Panc1 (cell line): ENCODE measurements at regions of chr5 and their contacts with region 1.

Region 1: GRCh38 chr5:157431544-157432200 is 28.3 kb upstream of the NIPAL4 start:
- DNase-seq: peak; percentile 24
- ATAC-seq: peak; percentile 79
- H3K4me3 ChIP-seq: no peak overlapping the region
- H3K27ac ChIP-seq: no peak overlapping the region
- H3K4me1 ChIP-seq: no peaks in the 10 kb centered on the region
- H3K27me3 ChIP-seq: no peaks in the 10 kb centered on the region
- CTCF ChIP-seq: peak; percentile 62

Region 2: DNA sequence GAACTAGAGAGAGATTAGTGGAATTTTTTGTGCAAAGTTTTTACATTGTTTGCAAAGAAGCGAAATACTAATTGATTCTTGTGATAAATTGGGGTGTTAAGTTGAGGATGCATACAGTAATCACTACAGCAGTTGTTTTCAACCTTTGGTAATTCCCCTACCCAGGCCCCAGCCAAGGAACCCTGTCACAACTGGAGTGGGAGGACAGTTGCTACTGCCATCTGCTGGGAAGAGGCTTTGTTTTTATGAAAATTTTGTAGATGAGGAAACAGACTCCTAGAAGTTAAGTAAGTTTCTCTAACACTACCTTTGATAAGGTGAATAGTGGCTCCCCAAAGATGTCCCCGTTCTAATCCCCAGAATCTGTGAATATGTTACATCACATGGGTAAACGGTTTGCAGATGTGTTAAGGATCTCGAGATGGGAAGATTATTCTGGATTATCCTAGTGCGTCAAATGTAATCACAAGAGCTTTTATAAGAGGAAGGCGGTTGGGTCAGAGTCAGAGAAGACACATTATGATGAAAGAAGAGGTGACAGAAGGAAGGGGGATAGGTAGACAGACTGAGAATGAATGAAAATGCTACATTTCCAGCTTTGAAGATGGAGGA is 615.6 kb before region 1 on chr5:
- CTCF ChIA-PET with region 1: no interaction called
- POLR2A ChIA-PET with region 1: no interaction called
- in situ Hi-C with region 1: no loop called
- intact Hi-C with region 1: no loop called
- DNase-seq: no peak
- ATAC-seq: no peak
- H3K4me3 ChIP-seq: no peak overlapping the region
- H3K27ac ChIP-seq: no peak overlapping the region
- H3K4me1 ChIP-seq: no peaks in the 10 kb centered on the region
- H3K27me3 ChIP-seq: no peaks in the 10 kb centered on the region
- CTCF ChIP-seq: peak; percentile 66

Region 3: GRCh38 chr5:157253547-157253946 is 178.1 kb before region 1 on chr5:
- CTCF ChIA-PET with region 1: interaction called, 10 read pairs
- POLR2A ChIA-PET with region 1: no interaction called
- in situ Hi-C with region 1: no loop called
- intact Hi-C with region 1: no loop called
- DNase-seq: peak; percentile 39
- ATAC-seq: peak; percentile 73; the same call in 1 of the 2 replicates
- H3K4me3 ChIP-seq: no peak overlapping the region
- H3K27ac ChIP-seq: no peak overlapping the region
- H3K4me1 ChIP-seq: no peaks in the 10 kb centered on the region
- H3K27me3 ChIP-seq: no peaks in the 10 kb centered on the region
- CTCF ChIP-seq: peak; percentile 87

Region 4: DNA sequence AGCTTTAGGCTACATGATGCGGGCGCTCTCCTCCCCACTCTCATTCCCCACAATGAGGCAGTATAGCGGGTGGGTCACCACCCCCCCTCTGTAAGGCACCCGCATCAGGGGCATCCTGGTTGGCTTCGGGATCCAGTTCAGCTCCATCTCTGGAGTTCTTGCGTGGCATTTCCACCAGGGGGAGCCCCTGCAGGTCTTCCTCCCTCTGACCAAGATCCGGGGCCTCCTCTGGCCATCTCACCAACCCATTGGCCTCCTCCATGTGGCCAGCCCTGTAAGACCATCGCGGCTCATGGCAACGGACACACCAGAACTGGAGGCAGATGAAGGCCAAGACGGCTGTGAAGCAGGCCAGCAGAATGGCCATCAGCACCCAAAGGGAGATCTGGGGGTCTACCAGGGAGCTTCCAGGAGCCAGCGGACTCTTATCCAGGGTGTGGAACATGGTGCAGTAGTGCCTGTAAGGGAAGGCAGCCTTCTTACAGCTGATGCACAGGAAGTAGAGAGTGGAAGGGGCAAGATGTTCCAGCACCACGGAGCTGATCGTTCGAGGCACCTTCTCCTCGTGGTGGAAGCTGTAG is 88.8 kb before region 1 on chr5:
- CTCF ChIA-PET with region 1: interaction called, 12 read pairs
- POLR2A ChIA-PET with region 1: no interaction called
- in situ Hi-C with region 1: no loop called
- intact Hi-C with region 1: no loop called
- DNase-seq: no peak
- ATAC-seq: 0 out of 2 replicates have a peak, but pooled peaks have one; percentile 62
- H3K4me3 ChIP-seq: no peak overlapping the region
- H3K27ac ChIP-seq: no peak overlapping the region
- H3K4me1 ChIP-seq: no peaks in the 10 kb centered on the region
- H3K27me3 ChIP-seq: peaks cover 3% of the 10 kb centered on the region
- CTCF ChIP-seq: peak; percentile 72

Region 5: GRCh38 chr5:157366741-157367674 is 64.7 kb before region 1 on chr5:
- CTCF ChIA-PET with region 1: no interaction called
- POLR2A ChIA-PET with region 1: no interaction called
- in situ Hi-C with region 1: no loop called
- intact Hi-C with region 1: no loop called
- DNase-seq: no peak
- ATAC-seq: no peak
- H3K4me3 ChIP-seq: no peak overlapping the region
- H3K27ac ChIP-seq: no peak overlapping the region
- H3K4me1 ChIP-seq: no peaks in the 10 kb centered on the region
- H3K27me3 ChIP-seq: peaks cover 7% of the 10 kb centered on the region
- CTCF ChIP-seq: peak; percentile 39

Region 6: GRCh38 chr5:157384971-157385709 is 46.5 kb before region 1 on chr5:
- CTCF ChIA-PET with region 1: no interaction called
- POLR2A ChIA-PET with region 1: no interaction called
- in situ Hi-C with region 1: no loop called
- intact Hi-C with region 1: no loop called
- DNase-seq: no peak
- ATAC-seq: no peak
- H3K4me3 ChIP-seq: no peak overlapping the region
- H3K27ac ChIP-seq: no peak overlapping the region
- H3K4me1 ChIP-seq: no peaks in the 10 kb centered on the region
- H3K27me3 ChIP-seq: no peaks in the 10 kb centered on the region; the same call in 1 of the 2 replicates
- CTCF ChIP-seq: no peak

Region 7: GRCh38 chr5:157476702-157477408 is 45.2 kb after region 1 on chr5:
- CTCF ChIA-PET with region 1: no interaction called
- POLR2A ChIA-PET with region 1: no interaction called
- in situ Hi-C with region 1: no loop called
- intact Hi-C with region 1: loop called (anchors 2 kb)
- DNase-seq: no peak
- ATAC-seq: peak; percentile 88
- H3K4me3 ChIP-seq: no peak overlapping the region
- H3K27ac ChIP-seq: no peak overlapping the region
- H3K4me1 ChIP-seq: no peaks in the 10 kb centered on the region
- H3K27me3 ChIP-seq: no peaks in the 10 kb centered on the region
- CTCF ChIP-seq: peak; percentile 87

Region 8: DNA sequence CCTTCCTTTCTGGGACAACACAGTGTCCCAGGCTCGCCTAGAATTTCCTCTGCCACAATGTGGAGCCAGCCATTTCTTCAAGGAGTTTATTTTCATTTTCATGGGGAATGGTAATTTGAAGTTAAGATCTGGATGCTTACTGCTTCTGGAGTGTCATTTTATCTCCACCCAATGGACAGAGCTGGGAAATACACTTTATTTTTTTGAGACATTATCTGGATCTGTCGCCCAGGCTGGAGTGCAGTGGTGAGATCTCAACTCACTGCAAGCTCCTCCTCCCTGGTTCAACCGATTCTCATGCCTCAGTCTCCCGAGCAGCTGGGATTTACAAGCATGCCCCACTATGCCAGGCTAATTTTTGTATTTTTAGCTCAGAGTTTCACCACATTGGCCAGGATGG is 286.8 kb after region 1 on chr5:
- CTCF ChIA-PET with region 1: interaction called, 3 read pairs
- POLR2A ChIA-PET with region 1: no interaction called
- in situ Hi-C with region 1: no loop called
- intact Hi-C with region 1: loop called (anchors 10 kb)
- DNase-seq: peak; percentile 48
- ATAC-seq: peak; percentile 91
- H3K4me3 ChIP-seq: no peak overlapping the region
- H3K27ac ChIP-seq: no peak overlapping the region
- H3K4me1 ChIP-seq: no peaks in the 10 kb centered on the region
- H3K27me3 ChIP-seq: no peaks in the 10 kb centered on the region
- CTCF ChIP-seq: peak; percentile 77